Heart left ventricle (tissue), 16 donors: ENCODE measurements at regions of chr22 and their contacts with region 1.

Region 1: DNA sequence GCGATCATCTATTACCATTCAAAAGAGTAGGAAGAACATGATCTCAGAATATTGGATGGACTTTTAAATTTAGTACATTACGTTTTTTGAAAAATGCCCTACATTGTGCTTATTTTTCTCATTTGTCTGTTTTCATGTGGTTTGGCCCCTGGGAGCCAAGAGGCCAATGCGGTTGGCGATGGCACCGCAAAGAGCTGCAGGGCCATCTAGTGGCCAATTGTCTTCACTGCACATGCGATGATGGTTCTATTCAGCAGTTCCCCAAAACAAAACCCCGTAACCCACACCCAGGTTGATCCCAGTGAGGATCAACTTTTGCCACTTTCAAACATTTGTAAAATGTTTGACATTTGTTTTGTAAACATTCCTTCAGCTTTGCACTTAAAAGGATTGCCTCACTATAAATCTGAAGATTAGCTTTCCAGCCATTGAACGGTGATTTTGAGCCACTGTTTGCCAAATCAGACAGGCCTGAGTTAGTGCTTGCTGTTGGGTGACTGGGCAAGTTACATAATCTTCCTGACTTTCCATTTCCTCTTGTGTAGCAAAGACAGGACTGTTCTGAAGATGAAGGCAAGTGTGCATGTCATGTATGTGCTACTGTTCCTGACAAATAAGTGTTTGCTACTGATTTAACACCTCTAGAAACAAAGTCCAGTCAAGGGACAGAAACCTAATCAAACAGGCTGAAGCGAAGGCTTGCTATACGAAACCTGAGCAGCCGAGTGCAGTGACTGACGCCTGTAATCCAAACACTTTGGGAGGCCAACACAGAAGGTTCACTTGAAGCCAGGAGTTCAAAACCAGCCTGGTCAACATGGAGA is 29.2 kb upstream of the XBP1 start:
- DNase-seq: peak; percentile 67 to 79 (median 73)
- ATAC-seq: peak in 3 of 4 donors; percentile 86 to 89 (median 87)
- H3K4me3 ChIP-seq: no peak overlapping the region
- H3K27ac ChIP-seq: no peak overlapping the region
- H3K4me1 ChIP-seq: peaks cover 0 to 13% (median 0%) of the 10 kb centered on the region in 12 donors
- H3K27me3 ChIP-seq: no peaks in the 10 kb centered on the region
- CTCF ChIP-seq: peak; percentile 95 to 99 (median 98)
- POLR2A ChIP-seq: no peak

Region 2: GRCh38 chr22:28019881-28020871 is 809.4 kb before region 1 on chr22:
- intact Hi-C with region 1: loop called in 6 of 10 experiments (anchors 2 to 10 kb)
- DNase-seq: peak; percentile 66 to 86 (median 73)
- ATAC-seq: peak; percentile 56 to 73 (median 70)
- H3K4me3 ChIP-seq: no peak overlapping the region
- H3K27ac ChIP-seq: peak overlapping the region in 2 of 12 donors; percentile 26 to 48
- H3K4me1 ChIP-seq: peaks cover 0 to 49% (median 19%) of the 10 kb centered on the region in 12 donors
- H3K27me3 ChIP-seq: no peaks in the 10 kb centered on the region
- CTCF ChIP-seq: peak; percentile 91 to 99 (median 96)
- POLR2A ChIP-seq: no peak

Region 3: DNA sequence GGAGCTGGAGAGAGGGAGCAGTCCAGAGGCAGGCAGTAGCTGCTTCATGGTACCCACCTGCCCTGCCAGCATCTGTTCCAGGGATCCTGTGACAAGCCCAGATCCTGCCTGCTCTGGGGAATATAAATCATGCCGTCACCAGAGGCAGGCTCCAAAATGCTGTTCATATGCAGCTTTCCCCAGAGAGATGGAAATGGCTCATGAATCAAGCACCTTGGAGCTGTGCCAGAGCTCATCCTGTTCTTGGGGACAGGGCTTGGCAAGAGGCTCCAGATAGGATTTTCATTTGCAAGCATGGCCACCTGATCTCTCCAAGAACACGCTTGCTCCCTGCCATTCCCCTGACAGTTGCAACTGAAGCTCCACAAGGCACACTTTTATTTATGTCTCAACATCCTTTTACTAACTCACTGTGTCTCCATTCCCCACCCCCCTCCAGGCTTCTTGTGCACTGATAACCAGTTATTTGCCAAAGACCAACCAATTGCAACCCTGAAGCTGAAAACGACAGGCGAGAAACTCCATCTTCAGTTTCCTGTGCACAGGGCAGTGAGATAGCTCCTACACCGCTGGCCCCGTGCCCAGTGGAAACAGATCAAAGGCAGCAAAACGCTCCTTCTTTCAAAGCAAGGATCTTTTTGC is 794.7 kb before region 1 on chr22:
- intact Hi-C with region 1: loop called in 1 of 10 experiments (anchors 10 kb)
- DNase-seq: peak; percentile 83 to 94 (median 88)
- ATAC-seq: peak; percentile 90 to 96 (median 94)
- H3K4me3 ChIP-seq: no peak overlapping the region
- H3K27ac ChIP-seq: peak overlapping the region; percentile 37 to 84 (median 70)
- H3K4me1 ChIP-seq: peaks cover 8 to 42% (median 25%) of the 10 kb centered on the region in 12 donors
- H3K27me3 ChIP-seq: no peaks in the 10 kb centered on the region
- CTCF ChIP-seq: no peak
- POLR2A ChIP-seq: no peak

Region 4: GRCh38 chr22:28600546-28601143 is 228.9 kb before region 1 on chr22:
- intact Hi-C with region 1: loop called (anchors 1 to 2 kb)
- DNase-seq: no peak
- ATAC-seq: peak in 1 of 4 donors; percentile 39
- H3K4me3 ChIP-seq: no peak overlapping the region
- H3K27ac ChIP-seq: no peak overlapping the region
- H3K4me1 ChIP-seq: no peaks in the 10 kb centered on the region
- H3K27me3 ChIP-seq: no peaks in the 10 kb centered on the region
- CTCF ChIP-seq: peak; percentile 26 to 77 (median 54)
- POLR2A ChIP-seq: no peak

Region 5: DNA sequence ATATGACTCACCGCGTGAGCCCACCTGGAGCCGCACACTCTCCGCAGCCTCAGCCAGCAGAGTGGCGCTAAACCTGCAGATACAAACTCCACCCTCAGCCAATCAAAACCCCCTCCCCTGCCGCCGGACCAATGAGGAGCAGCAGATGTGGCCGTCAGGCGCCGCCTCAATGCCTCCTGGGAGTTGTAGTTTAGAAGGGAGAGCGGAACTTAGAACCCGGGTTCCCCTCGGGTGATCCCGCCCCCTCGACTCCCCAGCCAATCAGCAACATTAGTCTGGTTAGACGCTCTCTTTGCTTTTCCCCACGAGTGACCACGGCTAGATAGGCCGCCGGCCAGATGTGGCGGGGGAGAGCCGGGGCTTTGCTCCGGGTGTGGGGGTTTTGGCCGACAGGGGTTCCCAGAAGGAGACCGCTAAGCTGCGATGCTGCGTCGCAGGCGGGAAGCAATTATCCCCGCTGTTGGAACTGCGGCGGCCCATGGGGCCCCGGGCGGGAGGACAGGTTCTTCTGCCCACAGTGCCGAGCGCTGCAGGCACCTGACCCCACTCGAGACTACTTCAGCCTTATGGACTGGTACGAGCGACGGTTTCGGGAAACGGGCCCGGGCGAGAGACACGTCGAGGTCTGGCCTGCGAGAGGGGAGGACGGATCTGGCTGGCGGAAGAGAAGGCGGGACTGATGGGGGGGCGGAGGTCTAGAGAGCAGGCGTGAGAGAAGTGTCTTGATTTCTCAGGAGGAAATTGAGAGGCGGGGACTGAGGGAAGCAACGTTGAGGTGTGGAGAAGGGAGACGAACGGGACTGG is 87.6 kb before region 1 on chr22 and contains the starts of genes CHEK2 and HSCB:
- intact Hi-C with region 1: loop called in 1 of 10 experiments (anchors 5 kb)
- DNase-seq: peak; percentile 98 to 99 (median 99)
- ATAC-seq: peak; percentile 98 to 99 (median 99)
- H3K4me3 ChIP-seq: peak within 1 kb of the TSS; percentile 67 to 99 (median 83)
- H3K27ac ChIP-seq: peak within 1 kb of the TSS; percentile 95 to 100 (median 99)
- H3K4me1 ChIP-seq: peaks cover 0 to 17% (median 10%) of the 10 kb centered on the region in 12 donors
- H3K27me3 ChIP-seq: no peaks in the 10 kb centered on the region
- CTCF ChIP-seq: peak in 4 of 12 donors; percentile 15 to 20 (median 16)
- POLR2A ChIP-seq: peak in 1 of 2 donors; percentile 65
- total RNA-seq, gene CHEK2: 1.1 to 7.8 (median 1.6) TPM
- total RNA-seq, gene HSCB: 7.4 to 18.3 (median 10.9) TPM